Aorta (tissue), 5 donors: ENCODE measurements at regions of chr6 and their contacts with region 1.

Region 1: DNA sequence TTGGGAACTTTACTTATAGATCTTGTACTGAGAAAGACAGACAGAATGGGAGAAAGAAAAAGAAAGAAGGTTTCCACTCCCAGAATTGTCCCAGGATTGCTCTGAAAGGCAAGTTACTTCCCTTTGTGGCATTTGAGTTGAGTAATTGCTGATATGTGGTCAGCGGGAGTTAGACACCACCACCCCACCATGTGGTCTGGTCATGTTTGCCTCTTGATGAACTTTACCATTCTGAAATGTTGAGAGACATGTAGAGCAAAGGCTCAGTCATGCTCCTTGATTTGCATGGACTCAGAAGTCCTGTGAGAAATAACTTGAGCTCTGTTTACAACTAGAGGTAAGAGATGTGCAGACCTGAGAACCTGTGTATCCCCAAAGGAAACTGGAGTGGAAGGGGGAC is 17.1 kb downstream of the TCF21 start:
- DNase-seq: no peak
- ATAC-seq: no peak
- H3K4me3 ChIP-seq: no peak overlapping the region
- H3K27ac ChIP-seq: no peak overlapping the region
- H3K4me1 ChIP-seq: no peaks in the 10 kb centered on the region
- H3K27me3 ChIP-seq: no peaks in the 10 kb centered on the region

Region 2: DNA sequence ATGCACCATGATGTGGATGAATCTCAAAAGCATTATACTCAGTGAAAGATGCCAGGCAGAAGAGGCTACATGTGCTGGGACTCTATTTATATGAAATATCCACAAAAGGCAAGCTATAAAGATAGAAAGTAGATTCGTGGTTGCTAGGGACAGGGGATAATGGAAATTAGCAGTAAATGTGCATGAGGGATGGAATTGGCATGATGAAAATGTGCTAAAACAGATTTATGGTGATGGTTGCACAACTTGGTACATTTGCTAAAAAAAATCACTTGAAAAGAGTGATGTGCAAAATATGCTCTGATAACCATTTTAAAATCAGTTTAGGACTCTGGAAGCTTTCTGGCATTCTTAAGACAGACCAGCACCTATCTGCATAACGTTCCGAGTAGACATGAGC is 982.3 kb after region 1 on chr6:
- intact Hi-C with region 1: loop called in 1 of 2 experiments (anchors 5 kb)
- DNase-seq: no peak
- ATAC-seq: no peak
- H3K4me3 ChIP-seq: no peak overlapping the region
- H3K27ac ChIP-seq: no peak overlapping the region
- H3K4me1 ChIP-seq: no peaks in the 10 kb centered on the region
- H3K27me3 ChIP-seq: no peaks in the 10 kb centered on the region